A549 (cell line): ENCODE measurements at regions of chr1 and their contacts with region 1.

Region 1: GRCh38 chr1:9292361-9293240 is at the start of gene SPSB1:
- DNase-seq: peak in 1 of 2 experiments; percentile 64
- ATAC-seq: peak; percentile 47 to 54
- H3K4me3 ChIP-seq: peak within 1 kb of the TSS; percentile 96
- H3K27ac ChIP-seq: peak within 1 kb of the TSS; percentile 93 to 99
- H3K4me1 ChIP-seq: peaks cover 57% of the 10 kb centered on the region
- CTCF ChIP-seq: no peak
- EP300 ChIP-seq: no peak
- POLR2A ChIP-seq: peak; percentile 67
- RAD21 ChIP-seq: no peak; a peak in 1 of 5 replicates
- polyA plus RNA-seq, gene SPSB1: 19.4 and 23.7 TPM in 2 replicates

Region 2: GRCh38 chr1:9239622-9240401 is 52.8 kb before region 1 on chr1:
- CTCF ChIA-PET with region 1: no interaction called
- POLR2A ChIA-PET with region 1: no interaction called
- DNase-seq: no peak
- ATAC-seq: no peak
- H3K4me3 ChIP-seq: no peak overlapping the region
- H3K27ac ChIP-seq: 0 out of 6 replicates have a peak overlapping the region, but pooled peaks of 1 of the 2 experiments have one; percentile 2
- H3K4me1 ChIP-seq: peaks cover 16% of the 10 kb centered on the region
- CTCF ChIP-seq: no peak
- EP300 ChIP-seq: no peak
- POLR2A ChIP-seq: no peak
- RAD21 ChIP-seq: no peak

Region 3: GRCh38 chr1:9280015-9280860 is 12.4 kb before region 1 on chr1:
- CTCF ChIA-PET with region 1: interaction called, 13 read pairs
- POLR2A ChIA-PET with region 1: interaction called, 4 read pairs
- DNase-seq: peak; percentile 75 to 89
- ATAC-seq: peak; percentile 90 to 94
- H3K4me3 ChIP-seq: no peak overlapping the region
- H3K27ac ChIP-seq: peak overlapping the region; percentile 57 to 72; a peak in 5 of 6 replicates
- H3K4me1 ChIP-seq: peaks cover 28% of the 10 kb centered on the region
- CTCF ChIP-seq: no peak
- EP300 ChIP-seq: no peak
- POLR2A ChIP-seq: no peak
- RAD21 ChIP-seq: no peak